CD8-positive, alpha-beta T cell (primary cell): ENCODE measurements at regions of chr6 and their contacts with region 1.

Region 1: DNA sequence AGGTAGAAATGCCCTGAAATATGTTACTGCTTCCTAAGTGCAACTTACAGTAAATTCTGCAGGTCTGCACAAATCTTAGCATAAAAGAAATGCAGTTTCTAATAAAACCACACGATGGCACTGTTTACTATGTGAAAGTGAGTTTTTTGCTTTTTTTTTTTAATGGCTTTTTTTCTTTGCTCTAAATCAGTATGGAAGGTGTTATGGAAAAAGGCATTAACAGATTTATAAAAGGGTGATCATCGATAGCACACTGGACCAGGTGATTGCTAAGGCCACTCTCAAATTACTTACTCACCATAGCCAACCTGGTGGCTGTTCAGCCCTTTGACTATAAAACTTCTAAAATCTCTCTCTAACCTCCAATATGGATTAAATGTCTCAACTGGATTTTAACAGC is 45.8 kb downstream of the AHI1 start:
- DNase-seq: peak in 2 of 9 experiments; percentile 55 to 63
- ATAC-seq: peak; percentile 52
- H3K4me3 ChIP-seq: no peak overlapping the region
- H3K4me3 Mint-ChIP-seq: no peak overlapping the region
- H3K27ac ChIP-seq: no peak overlapping the region
- H3K27ac Mint-ChIP-seq: no peak overlapping the region
- H3K4me1 ChIP-seq: no peaks in the 10 kb centered on the region
- H3K4me1 Mint-ChIP-seq: no peaks in the 10 kb centered on the region
- H3K27me3 ChIP-seq: no peaks in the 10 kb centered on the region
- H3K27me3 Mint-ChIP-seq: no peaks in the 10 kb centered on the region
- CTCF ChIP-seq: peak; percentile 94

Region 2: DNA sequence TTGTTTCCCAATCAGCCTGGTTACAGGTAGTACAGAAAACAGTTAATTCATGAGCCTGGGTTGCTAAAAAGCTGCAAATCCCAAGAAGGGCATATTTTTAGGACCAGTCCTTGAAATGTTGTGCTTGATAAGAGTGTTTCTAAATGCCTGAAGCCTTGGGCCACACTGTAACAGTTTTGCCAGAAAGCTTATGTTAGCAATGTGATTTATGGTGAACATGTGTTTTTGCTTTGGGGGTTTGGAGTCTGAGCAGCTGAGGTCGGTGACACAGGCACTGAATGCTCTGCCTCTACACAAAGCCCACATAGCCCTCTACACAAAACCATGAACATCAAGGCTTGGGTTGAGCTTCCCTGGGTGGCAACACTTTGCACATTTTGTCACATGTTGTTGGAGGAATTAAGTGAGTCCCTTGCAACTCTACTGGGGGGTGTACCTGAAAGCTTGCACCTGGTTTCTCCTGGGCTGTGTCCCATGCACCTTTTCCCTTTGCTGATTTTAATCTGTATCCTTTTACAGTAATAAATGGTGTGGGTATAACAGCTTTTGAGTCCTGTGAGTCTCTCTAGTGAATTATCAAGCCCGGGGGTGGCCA is 23.7 kb after region 1 on chr6:
- CTCF ChIA-PET with region 1: no interaction called
- POLR2A ChIA-PET with region 1: no interaction called
- intact Hi-C with region 1: no loop called
- DNase-seq: no peak
- ATAC-seq: no peak
- H3K4me3 ChIP-seq: no peak overlapping the region
- H3K4me3 Mint-ChIP-seq: no peak overlapping the region
- H3K27ac ChIP-seq: no peak overlapping the region
- H3K27ac Mint-ChIP-seq: no peak overlapping the region
- H3K4me1 ChIP-seq: no peaks in the 10 kb centered on the region
- H3K4me1 Mint-ChIP-seq: no peaks in the 10 kb centered on the region
- H3K27me3 ChIP-seq: no peaks in the 10 kb centered on the region
- H3K27me3 Mint-ChIP-seq: no peaks in the 10 kb centered on the region
- CTCF ChIP-seq: no peak

Region 3: DNA sequence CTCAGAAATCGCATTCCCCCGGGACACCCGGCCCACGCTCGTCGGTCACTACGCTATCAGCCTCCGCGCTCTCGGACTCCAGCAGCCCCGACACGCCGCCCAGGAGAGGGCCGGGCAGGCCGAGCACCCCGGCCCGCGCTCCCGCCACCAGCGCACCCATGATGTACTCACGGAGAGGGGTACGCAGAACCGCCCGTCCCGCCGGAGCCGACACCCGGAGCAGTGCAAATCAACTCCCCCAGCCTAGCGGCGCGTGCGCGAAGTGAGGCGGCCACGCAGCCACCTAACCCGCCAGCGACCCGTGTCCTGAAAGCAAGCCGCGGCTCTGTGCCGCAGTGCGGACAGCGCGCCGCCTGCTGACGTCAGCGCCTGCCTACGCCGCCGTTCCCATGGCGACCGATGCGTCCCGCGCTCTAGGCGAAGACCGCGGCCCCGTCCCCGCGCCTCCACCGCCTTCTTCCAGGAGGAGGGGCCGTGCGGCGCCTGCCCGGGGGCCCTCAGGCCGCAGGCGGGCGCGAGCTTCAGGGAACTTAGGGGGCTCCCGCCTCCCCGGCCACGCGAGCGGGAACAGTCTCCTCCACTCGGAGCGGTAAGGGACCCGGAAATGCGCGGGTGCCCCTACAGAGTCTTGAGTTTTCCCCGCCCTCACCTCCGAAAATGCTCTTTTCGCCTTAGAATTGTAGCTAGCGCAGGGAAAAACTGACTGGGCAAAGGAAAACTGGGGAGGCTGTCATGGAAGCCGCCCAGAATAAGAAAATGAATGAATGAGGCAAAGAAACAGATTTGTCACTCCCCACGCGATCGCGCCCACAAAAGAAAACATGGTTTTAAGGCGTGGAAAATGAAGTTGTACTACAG is 45.9 kb after region 1 on chr6 and contains the start of gene AHI1:
- CTCF ChIA-PET with region 1: interaction called, 4 read pairs
- POLR2A ChIA-PET with region 1: no interaction called
- intact Hi-C with region 1: loop called in 1 of 2 experiments (anchors 1 kb)
- DNase-seq: peak; percentile 81 to 95 (median 86)
- ATAC-seq: peak; percentile 72
- H3K4me3 ChIP-seq: peak within 1 kb of the TSS; percentile 87 to 95
- H3K4me3 Mint-ChIP-seq: no peak within 1 kb of the TSS
- H3K27ac ChIP-seq: peak within 1 kb of the TSS; percentile 91 to 98
- H3K27ac Mint-ChIP-seq: no peak within 1 kb of the TSS
- H3K4me1 ChIP-seq: peaks cover 6% of the 10 kb centered on the region
- H3K4me1 Mint-ChIP-seq: peaks cover 8% of the 10 kb centered on the region
- H3K27me3 ChIP-seq: no peaks in the 10 kb centered on the region
- H3K27me3 Mint-ChIP-seq: no peaks in the 10 kb centered on the region
- CTCF ChIP-seq: no peak
- total RNA-seq, gene AHI1: 16.0 to 17.9 TPM

Region 4: DNA sequence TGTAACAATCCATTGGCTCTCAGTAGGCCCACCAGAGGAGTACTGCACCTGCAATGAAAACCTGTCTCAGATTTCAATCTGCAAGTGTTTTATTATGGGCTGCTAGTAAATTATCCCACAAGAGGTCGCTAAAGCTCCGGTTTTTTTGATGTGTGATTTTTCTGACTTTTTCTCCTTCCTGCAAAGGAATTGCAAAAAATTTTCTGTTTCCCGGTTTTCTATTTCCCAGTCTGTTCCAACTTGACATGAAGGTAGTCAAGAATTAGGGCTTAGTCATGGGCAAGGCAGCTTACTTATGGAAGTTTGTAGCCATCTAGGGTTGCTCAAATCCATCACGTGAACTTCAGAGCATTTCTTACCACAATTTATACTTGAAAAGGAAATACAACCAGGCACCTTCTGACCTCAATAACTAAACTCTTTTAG is 84.3 kb after region 1 on chr6:
- CTCF ChIA-PET with region 1: interaction called, 9 read pairs
- POLR2A ChIA-PET with region 1: no interaction called
- intact Hi-C with region 1: loop called (anchors 5 kb)
- DNase-seq: peak in 2 of 9 experiments; percentile 52 to 62
- ATAC-seq: peak; percentile 46
- H3K4me3 ChIP-seq: no peak overlapping the region
- H3K4me3 Mint-ChIP-seq: peak overlapping the region; percentile 67
- H3K27ac ChIP-seq: no peak overlapping the region
- H3K27ac Mint-ChIP-seq: no peak overlapping the region
- H3K4me1 ChIP-seq: no peaks in the 10 kb centered on the region
- H3K4me1 Mint-ChIP-seq: peaks cover 10% of the 10 kb centered on the region
- H3K27me3 ChIP-seq: no peaks in the 10 kb centered on the region
- H3K27me3 Mint-ChIP-seq: peaks cover 2% of the 10 kb centered on the region
- CTCF ChIP-seq: peak; percentile 76